Activated CD4-positive, alpha-beta memory T cell treated with anti-CD3 and anti-CD28 coated beads for 36 hours (primary cell): ENCODE measurements at regions of chr17 and their contacts with region 1.

Region 1: GRCh38 chr17:56592487-56593085 is 913 bp upstream of the NOG start:
- DNase-seq: peak; percentile 70
- H3K4me3 Mint-ChIP-seq: peak overlapping the region; percentile 60
- H3K27ac Mint-ChIP-seq: no peak overlapping the region
- H3K4me1 Mint-ChIP-seq: peaks cover 23% of the 10 kb centered on the region
- H3K27me3 Mint-ChIP-seq: peaks cover 44% of the 10 kb centered on the region

Region 2: GRCh38 chr17:56549501-56549900 is 43.1 kb before region 1 on chr17:
- CTCF ChIA-PET with region 1: no interaction called
- POLR2A ChIA-PET with region 1: no interaction called
- intact Hi-C with region 1: no loop called
- DNase-seq: no peak
- H3K4me3 Mint-ChIP-seq: no peak overlapping the region
- H3K27ac Mint-ChIP-seq: no peak overlapping the region
- H3K4me1 Mint-ChIP-seq: no peaks in the 10 kb centered on the region
- H3K27me3 Mint-ChIP-seq: peaks cover 14% of the 10 kb centered on the region

Region 3: DNA sequence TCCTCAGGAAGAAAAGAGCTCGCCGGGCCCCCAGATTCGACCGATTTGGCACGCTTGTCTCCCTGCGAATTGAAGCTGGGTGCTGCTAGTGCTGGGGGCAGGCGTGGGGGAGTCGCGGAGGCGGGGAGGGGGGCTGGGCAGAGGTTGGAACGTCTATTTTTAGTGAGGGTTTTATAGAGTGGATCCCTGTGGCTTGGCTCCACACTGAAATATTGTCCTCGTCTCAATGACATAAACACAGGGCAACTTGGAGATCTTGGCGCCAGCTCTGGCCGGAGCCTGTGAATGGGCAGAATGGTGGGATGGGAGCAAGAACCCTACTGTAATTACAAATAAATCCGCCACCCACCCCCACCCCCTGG is 14.8 kb before region 1 on chr17:
- CTCF ChIA-PET with region 1: interaction called, 10 read pairs
- POLR2A ChIA-PET with region 1: no interaction called
- intact Hi-C with region 1: no loop called
- DNase-seq: no peak
- H3K4me3 Mint-ChIP-seq: no peak overlapping the region
- H3K27ac Mint-ChIP-seq: no peak overlapping the region
- H3K4me1 Mint-ChIP-seq: no peaks in the 10 kb centered on the region
- H3K27me3 Mint-ChIP-seq: peaks cover 15% of the 10 kb centered on the region

Region 4: GRCh38 chr17:56653877-56654276 is 61.3 kb after region 1 on chr17:
- CTCF ChIA-PET with region 1: interaction called, 34 read pairs
- POLR2A ChIA-PET with region 1: no interaction called
- intact Hi-C with region 1: loop called (anchors 1 kb)
- DNase-seq: peak; percentile 71
- H3K4me3 Mint-ChIP-seq: no peak overlapping the region
- H3K27ac Mint-ChIP-seq: no peak overlapping the region
- H3K4me1 Mint-ChIP-seq: peaks cover 3% of the 10 kb centered on the region
- H3K27me3 Mint-ChIP-seq: peaks cover 4% of the 10 kb centered on the region

Region 5: DNA sequence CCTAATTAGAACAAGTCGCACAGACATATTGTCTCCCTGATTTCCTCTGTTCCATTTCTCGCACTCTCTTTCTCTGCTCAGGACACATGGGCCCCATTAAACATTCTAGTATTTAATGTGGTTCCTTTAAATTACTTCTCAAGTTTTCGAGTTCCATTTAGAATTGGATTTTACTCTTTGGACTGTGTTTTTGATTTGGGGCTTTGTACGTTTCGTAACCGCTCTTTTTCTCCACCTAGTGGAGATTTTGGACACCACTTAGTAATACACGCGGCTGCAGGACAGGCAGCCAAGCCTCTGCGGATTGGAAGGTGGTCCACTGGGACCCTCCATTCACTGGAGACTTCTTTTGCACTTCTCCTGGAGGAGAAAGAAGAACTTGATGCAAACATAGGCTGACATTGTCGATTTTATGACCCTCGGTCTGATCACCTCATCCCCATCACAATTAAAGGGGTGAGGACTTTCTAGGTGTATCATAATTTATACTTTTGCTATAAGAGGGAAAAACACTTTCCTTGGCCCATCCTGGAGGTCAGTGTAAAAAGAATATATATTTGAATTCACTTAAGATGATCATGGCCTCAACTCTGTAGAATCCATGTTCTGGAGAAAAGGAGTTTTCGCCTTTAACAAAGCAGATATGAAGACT is 86.7 kb after region 1 on chr17:
- CTCF ChIA-PET with region 1: interaction called, 12 read pairs
- POLR2A ChIA-PET with region 1: no interaction called
- intact Hi-C with region 1: loop called (anchors 2 kb)
- DNase-seq: no peak
- H3K4me3 Mint-ChIP-seq: peak overlapping the region; percentile 52
- H3K27ac Mint-ChIP-seq: no peak overlapping the region
- H3K4me1 Mint-ChIP-seq: peaks cover 19% of the 10 kb centered on the region
- H3K27me3 Mint-ChIP-seq: peaks cover 33% of the 10 kb centered on the region

Region 6: GRCh38 chr17:56960596-56961538 is 368.3 kb after region 1 on chr17 and contains the start of gene COIL:
- CTCF ChIA-PET with region 1: no interaction called
- POLR2A ChIA-PET with region 1: no interaction called
- intact Hi-C with region 1: loop called (anchors 10 kb)
- DNase-seq: peak; percentile 95
- H3K4me3 Mint-ChIP-seq: peak within 1 kb of the TSS; percentile 80
- H3K27ac Mint-ChIP-seq: peak within 1 kb of the TSS; percentile 85
- H3K4me1 Mint-ChIP-seq: peaks cover 26% of the 10 kb centered on the region
- H3K27me3 Mint-ChIP-seq: no peaks in the 10 kb centered on the region
- total RNA-seq, gene COIL: 16.9 TPM

Region 7: DNA sequence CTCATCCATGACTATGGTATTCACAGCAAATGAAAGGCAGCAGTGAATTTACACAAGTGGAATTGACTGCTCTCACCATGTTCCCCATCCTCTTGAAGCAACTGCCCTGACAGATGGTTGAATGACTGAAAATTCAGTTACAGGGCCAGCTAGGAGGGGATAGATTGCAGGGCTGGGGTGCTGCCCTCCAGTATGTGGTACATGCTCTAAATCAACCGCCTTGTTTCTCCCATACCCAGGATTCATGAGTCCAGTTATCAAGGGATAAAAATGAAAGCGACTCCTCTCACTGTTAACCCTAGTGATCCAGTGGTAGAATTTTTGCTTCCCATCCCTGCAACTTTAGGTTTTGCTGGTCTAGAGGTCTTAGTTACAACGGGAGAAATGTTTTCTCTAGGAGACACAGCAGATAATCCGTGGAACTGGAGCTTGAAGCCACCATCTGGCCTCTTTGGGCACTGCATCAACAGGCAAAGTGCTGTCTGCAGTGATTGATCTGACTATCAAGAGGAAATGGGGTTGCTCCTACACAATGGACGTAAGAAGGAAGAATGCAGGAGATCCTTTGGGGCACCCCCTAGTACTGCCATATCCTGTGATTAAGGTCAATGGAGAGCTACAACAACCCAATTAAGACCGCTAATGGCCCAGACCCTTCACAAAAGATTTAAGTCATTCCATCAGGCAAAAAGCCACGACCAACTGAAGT is 417.3 kb after region 1 on chr17:
- CTCF ChIA-PET with region 1: no interaction called
- POLR2A ChIA-PET with region 1: no interaction called
- intact Hi-C with region 1: no loop called
- DNase-seq: peak; percentile 72
- H3K4me3 Mint-ChIP-seq: no peak overlapping the region
- H3K27ac Mint-ChIP-seq: no peak overlapping the region
- H3K4me1 Mint-ChIP-seq: peaks cover 7% of the 10 kb centered on the region
- H3K27me3 Mint-ChIP-seq: peaks cover 4% of the 10 kb centered on the region